Activated naive CD4-positive, alpha-beta T cell treated with anti-CD3 and anti-CD28 coated beads for 36 hours (primary cell): ENCODE measurements at regions of chr13 and their contacts with region 1.

Region 1: GRCh38 chr13:106567474-106568298 is at the start of gene ARGLU1:
- DNase-seq: peak; percentile 96
- H3K4me3 Mint-ChIP-seq: peak within 1 kb of the TSS; percentile 99
- H3K27ac Mint-ChIP-seq: peak within 1 kb of the TSS; percentile 95
- H3K4me1 Mint-ChIP-seq: peaks cover 53% of the 10 kb centered on the region
- H3K27me3 Mint-ChIP-seq: no peaks in the 10 kb centered on the region
- total RNA-seq, gene ARGLU1: 82.3 to 86.6 TPM

Region 2: GRCh38 chr13:105139380-105140285 is 1428.1 kb before region 1 on chr13:
- CTCF ChIA-PET with region 1: no interaction called
- intact Hi-C with region 1: loop called (anchors 1 kb)
- DNase-seq: peak; percentile 74
- H3K4me3 Mint-ChIP-seq: peak overlapping the region; percentile 89
- H3K27ac Mint-ChIP-seq: peak overlapping the region; percentile 99
- H3K4me1 Mint-ChIP-seq: peaks cover 17% of the 10 kb centered on the region
- H3K27me3 Mint-ChIP-seq: no peaks in the 10 kb centered on the region

Region 3: GRCh38 chr13:106311004-106311403 is 256.7 kb before region 1 on chr13:
- CTCF ChIA-PET with region 1: no interaction called
- intact Hi-C with region 1: no loop called
- DNase-seq: no peak
- H3K4me3 Mint-ChIP-seq: no peak overlapping the region
- H3K27ac Mint-ChIP-seq: no peak overlapping the region
- H3K4me1 Mint-ChIP-seq: no peaks in the 10 kb centered on the region
- H3K27me3 Mint-ChIP-seq: peaks cover 2% of the 10 kb centered on the region

Region 4: GRCh38 chr13:106418556-106418955 is 149.1 kb before region 1 on chr13:
- CTCF ChIA-PET with region 1: no interaction called
- intact Hi-C with region 1: no loop called
- DNase-seq: no peak
- H3K4me3 Mint-ChIP-seq: no peak overlapping the region
- H3K27ac Mint-ChIP-seq: no peak overlapping the region
- H3K4me1 Mint-ChIP-seq: no peaks in the 10 kb centered on the region
- H3K27me3 Mint-ChIP-seq: peaks cover 9% of the 10 kb centered on the region

Region 5: DNA sequence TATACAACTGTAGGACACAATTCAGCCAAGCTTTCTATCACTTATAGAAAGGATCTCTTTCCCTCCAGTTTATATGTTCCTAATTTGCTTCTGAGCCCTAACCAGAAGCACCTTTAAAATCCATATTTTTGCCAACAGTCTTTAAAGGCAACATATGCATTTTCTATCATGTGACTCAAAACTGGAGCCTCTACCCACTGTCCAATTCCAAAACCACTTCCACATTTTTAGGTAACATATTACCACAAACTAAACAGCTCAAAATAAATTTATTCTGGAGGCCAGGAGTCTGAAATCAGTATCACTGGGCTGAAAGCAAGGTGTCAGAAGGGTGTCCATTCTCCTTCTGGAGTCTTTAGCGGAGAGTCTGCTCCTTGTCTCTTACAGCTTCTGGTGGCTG is 16.3 kb before region 1 on chr13:
- CTCF ChIA-PET with region 1: no interaction called
- intact Hi-C with region 1: loop called (anchors 2 kb)
- DNase-seq: no peak
- H3K4me3 Mint-ChIP-seq: no peak overlapping the region
- H3K27ac Mint-ChIP-seq: no peak overlapping the region
- H3K4me1 Mint-ChIP-seq: peaks cover 29% of the 10 kb centered on the region
- H3K27me3 Mint-ChIP-seq: no peaks in the 10 kb centered on the region

Region 6: GRCh38 chr13:106599875-106600797 is 32.5 kb after region 1 on chr13:
- CTCF ChIA-PET with region 1: no interaction called
- intact Hi-C with region 1: loop called (anchors 2 kb)
- DNase-seq: peak; percentile 13
- H3K4me3 Mint-ChIP-seq: no peak overlapping the region
- H3K27ac Mint-ChIP-seq: no peak overlapping the region
- H3K4me1 Mint-ChIP-seq: peaks cover 13% of the 10 kb centered on the region
- H3K27me3 Mint-ChIP-seq: peaks cover 8% of the 10 kb centered on the region

Region 7: DNA sequence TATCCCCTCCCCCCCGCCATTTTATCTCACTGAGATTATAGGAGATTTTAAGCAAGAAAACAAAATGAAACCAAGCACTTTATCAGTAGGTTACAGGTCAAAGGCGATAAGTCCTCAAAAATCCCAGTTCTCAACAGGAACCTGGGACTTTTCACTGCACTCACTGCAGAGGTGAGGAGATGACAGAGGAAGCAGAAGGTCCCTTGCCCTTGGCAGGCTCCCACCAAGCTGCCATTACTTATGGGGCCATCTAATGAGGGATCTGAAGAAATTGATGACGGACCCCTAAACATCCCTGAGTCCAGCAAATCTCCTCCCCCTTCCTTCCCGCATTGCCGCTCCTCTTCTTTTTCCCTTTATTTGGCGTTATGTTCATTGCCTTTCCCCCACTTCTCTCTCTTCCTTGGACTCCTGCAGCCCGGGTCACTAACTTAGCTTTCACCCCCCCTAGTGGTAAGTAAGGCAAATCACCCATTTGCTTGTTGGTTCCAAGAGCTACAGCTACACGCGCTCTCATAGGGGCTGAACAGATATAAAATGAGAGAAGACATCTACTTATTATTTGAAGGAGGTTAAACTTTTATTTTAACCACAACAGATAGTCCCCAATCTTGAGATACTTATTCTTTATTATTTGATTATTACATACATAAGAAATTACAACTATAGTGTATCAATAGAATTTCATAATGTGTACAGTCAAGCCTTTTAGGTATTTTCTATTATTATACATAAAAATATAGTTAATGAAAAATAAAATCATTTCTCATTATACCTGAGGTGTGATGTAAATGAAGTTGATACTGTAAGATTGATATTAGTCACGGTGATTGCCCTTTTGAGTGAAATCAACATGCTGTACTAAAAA is 52.2 kb after region 1 on chr13:
- CTCF ChIA-PET with region 1: interaction called, 12 read pairs
- intact Hi-C with region 1: no loop called
- DNase-seq: peak; percentile 25
- H3K4me3 Mint-ChIP-seq: no peak overlapping the region
- H3K27ac Mint-ChIP-seq: no peak overlapping the region
- H3K4me1 Mint-ChIP-seq: peaks cover 2% of the 10 kb centered on the region
- H3K27me3 Mint-ChIP-seq: peaks cover 17% of the 10 kb centered on the region

Region 8: GRCh38 chr13:106917673-106918556 is 350.2 kb after region 1 on chr13:
- CTCF ChIA-PET with region 1: no interaction called
- intact Hi-C with region 1: loop called (anchors 2 kb)
- DNase-seq: peak; percentile 73
- H3K4me3 Mint-ChIP-seq: peak overlapping the region; percentile 72
- H3K27ac Mint-ChIP-seq: no peak overlapping the region
- H3K4me1 Mint-ChIP-seq: peaks cover 7% of the 10 kb centered on the region
- H3K27me3 Mint-ChIP-seq: peaks cover 44% of the 10 kb centered on the region

Region 9: DNA sequence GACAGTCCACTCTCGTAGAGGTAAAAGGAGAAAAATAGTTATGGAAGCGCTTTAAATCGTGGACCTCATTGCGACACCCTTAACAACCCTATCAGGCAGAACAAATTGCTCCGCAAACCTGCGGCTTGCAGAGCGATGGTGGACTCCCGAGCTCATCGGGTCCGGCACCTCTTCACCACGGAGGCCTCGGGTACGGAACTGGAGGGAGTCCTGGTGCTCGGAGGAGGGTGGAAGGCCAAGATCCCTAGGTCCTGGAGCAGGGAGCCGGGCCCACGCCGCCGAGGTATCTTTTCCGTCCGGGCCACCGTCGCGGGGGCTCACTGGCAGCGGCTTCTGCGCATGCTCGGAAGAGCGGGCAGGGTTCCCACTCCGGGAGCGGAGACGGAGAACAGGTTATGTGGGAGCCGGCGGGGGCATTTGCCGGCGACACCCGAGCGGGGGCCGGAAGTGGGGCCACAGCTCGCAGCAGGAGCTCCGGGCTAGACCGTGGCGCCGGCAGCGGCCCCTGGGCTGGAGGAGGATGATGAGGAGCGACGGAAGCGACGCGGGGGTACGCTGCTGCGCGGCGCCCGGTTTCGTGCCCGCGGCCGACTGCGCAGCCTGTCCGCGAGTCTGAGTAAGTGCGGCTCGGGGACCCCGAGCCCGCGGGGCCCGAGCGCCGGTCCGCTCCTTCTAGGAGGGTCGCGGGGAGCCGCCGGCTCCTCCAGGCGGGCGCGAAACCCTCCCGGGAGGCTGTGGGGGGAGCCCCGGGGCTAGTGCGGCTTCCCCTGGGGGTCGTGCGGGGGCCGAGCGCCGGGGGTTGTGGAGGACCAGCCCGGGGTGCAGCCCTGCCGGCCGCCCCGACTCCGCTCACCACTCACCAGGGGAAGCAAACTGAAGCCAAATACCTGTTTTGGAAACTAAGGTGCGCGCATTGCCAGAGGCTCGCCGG is 1650.6 kb after region 1 on chr13 and contains the start of gene ABHD13:
- CTCF ChIA-PET with region 1: no interaction called
- intact Hi-C with region 1: loop called (anchors 5 kb)
- DNase-seq: peak; percentile 87
- H3K4me3 Mint-ChIP-seq: peak within 1 kb of the TSS; percentile 90
- H3K27ac Mint-ChIP-seq: peak within 1 kb of the TSS; percentile 94
- H3K4me1 Mint-ChIP-seq: peaks cover 48% of the 10 kb centered on the region
- H3K27me3 Mint-ChIP-seq: no peaks in the 10 kb centered on the region
- total RNA-seq, gene ABHD13: 3.4 to 3.8 TPM